ENCODE measurements at regions of chr3 and their contacts with region 1.

Region 1: DNA sequence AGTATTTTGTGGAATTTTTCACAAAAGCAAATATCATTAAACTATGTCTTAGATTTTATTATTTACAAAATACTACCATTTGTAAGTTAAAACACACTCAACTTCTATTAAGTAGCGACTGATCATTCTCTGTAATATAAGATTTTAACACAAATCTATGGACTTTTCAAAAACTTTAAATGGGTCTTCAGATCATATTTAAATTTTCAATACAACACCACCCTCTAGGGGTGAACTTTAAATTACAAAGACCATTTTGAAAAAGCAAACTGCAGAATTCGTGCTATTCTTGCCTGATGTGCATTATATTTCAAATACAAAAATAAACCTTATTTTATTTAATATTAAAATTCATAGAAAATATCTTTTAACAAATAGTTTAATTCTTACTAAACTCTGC is 8.2 kb upstream of the VGLL4 start:
- DNase-seq: no peak
- H3K4me3 ChIP-seq: no peak overlapping the region
- H3K27ac ChIP-seq: no peak overlapping the region
- H3K4me1 ChIP-seq: no peaks in the 10 kb centered on the region
- H3K27me3 ChIP-seq: no peaks in the 10 kb centered on the region
- CTCF ChIP-seq: peak; percentile 26 to 29

Region 2: GRCh38 chr3:11385891-11386290 is 266.0 kb before region 1 on chr3:
- CTCF ChIA-PET with region 1: no interaction called
- dilution Hi-C with region 1: no loop called
- in situ Hi-C with region 1: loop called (anchors 10 kb)
- intact Hi-C with region 1: no loop called
- DNase-seq: peak; percentile 80
- H3K4me3 ChIP-seq: no peak overlapping the region
- H3K27ac ChIP-seq: peak overlapping the region; percentile 45
- H3K4me1 ChIP-seq: peaks cover 29% of the 10 kb centered on the region
- H3K27me3 ChIP-seq: no peaks in the 10 kb centered on the region
- CTCF ChIP-seq: no peak

Region 3: GRCh38 chr3:11601446-11602238 is 50.3 kb before region 1 on chr3:
- CTCF ChIA-PET with region 1: no interaction called
- dilution Hi-C with region 1: loop called (anchors 5 kb)
- in situ Hi-C with region 1: no loop called
- intact Hi-C with region 1: no loop called
- DNase-seq: no peak
- H3K4me3 ChIP-seq: no peak overlapping the region
- H3K27ac ChIP-seq: no peak overlapping the region
- H3K4me1 ChIP-seq: peaks cover 31% of the 10 kb centered on the region
- H3K27me3 ChIP-seq: no peaks in the 10 kb centered on the region
- CTCF ChIP-seq: no peak

Region 4: GRCh38 chr3:11690863-11691767 is 39.2 kb after region 1 on chr3:
- CTCF ChIA-PET with region 1: no interaction called
- dilution Hi-C with region 1: no loop called
- in situ Hi-C with region 1: no loop called
- intact Hi-C with region 1: no loop called
- DNase-seq: peak; percentile 39
- H3K4me3 ChIP-seq: no peak overlapping the region
- H3K27ac ChIP-seq: peak overlapping the region; percentile 2
- H3K4me1 ChIP-seq: peaks cover 10% of the 10 kb centered on the region
- H3K27me3 ChIP-seq: no peaks in the 10 kb centered on the region
- CTCF ChIP-seq: no peak

Region 5: DNA sequence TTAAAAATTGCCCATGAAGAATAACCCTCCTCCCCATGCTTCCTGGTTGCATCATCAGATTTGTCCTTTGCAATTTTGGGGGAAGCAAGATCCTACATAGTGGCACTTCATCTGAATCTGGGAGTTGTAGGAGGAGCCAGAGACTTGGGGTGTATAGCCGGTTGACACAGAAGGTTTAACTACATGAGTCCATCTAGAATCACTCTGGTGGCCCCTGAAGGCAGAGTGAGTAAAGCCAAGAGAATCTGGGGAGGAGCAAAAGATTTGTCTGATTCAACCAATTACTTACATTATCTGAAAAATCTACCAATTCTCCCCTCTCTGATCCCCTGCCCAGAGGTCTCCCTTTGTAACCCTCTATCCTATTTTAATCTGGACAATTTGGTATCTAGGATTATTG is 402.4 kb after region 1 on chr3:
- CTCF ChIA-PET with region 1: no interaction called
- dilution Hi-C with region 1: no loop called
- in situ Hi-C with region 1: no loop called
- intact Hi-C with region 1: no loop called
- DNase-seq: no peak
- H3K4me3 ChIP-seq: no peak overlapping the region
- H3K27ac ChIP-seq: no peak overlapping the region
- H3K4me1 ChIP-seq: no peaks in the 10 kb centered on the region
- H3K27me3 ChIP-seq: peaks cover 2% of the 10 kb centered on the region
- CTCF ChIP-seq: no peak